Activated CD4-positive, alpha-beta T cell treated with anti-CD3 and anti-CD28 coated beads for 36 hours (primary cell): ENCODE measurements at regions of chr15 and their contacts with region 1.

Region 1: DNA sequence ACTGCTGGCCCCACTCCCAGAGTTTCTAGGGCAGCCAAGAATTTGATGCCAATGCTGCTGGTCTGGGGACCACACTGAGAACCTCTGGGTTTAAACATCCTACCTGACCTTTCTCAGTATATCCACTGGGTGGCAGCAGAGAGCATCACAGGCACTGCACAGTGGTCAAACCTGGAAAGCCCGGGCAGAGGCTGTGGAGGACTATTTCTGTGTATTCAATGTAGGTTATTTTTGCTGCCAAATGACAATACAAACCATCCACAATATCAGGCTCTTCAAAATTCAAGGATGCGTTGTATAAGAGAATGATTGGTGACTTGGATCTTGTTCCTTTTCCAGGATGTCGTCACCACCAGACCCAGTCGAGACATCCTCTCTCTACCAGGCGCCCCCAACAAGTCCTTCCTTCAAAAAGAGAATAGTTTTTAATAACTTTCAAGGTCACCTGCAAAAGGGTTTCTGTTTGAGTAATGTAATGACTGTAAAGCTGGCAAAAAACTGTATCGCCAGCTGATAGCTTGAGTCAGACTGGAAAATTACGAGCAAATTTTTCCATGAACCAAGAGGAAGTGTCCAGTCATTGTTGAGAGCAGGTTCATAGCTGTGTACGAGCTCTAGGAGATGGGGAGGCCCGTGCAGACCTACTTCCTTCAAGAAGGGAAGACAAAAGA is 30.5 kb upstream of the MYZAP start:
- DNase-seq: peak; percentile 74
- ATAC-seq: peak; percentile 83
- H3K4me3 Mint-ChIP-seq: peak overlapping the region; percentile 17
- H3K27ac Mint-ChIP-seq: peak overlapping the region; percentile 89
- H3K4me1 Mint-ChIP-seq: peaks cover 37% of the 10 kb centered on the region
- H3K27me3 Mint-ChIP-seq: no peaks in the 10 kb centered on the region

Region 2: GRCh38 chr15:57548835-57549234 is 12.3 kb before region 1 on chr15:
- CTCF ChIA-PET with region 1: interaction called, 10 read pairs
- POLR2A ChIA-PET with region 1: no interaction called
- intact Hi-C with region 1: no loop called
- DNase-seq: no peak
- ATAC-seq: no peak
- H3K4me3 Mint-ChIP-seq: no peak overlapping the region
- H3K27ac Mint-ChIP-seq: no peak overlapping the region
- H3K4me1 Mint-ChIP-seq: no peaks in the 10 kb centered on the region
- H3K27me3 Mint-ChIP-seq: no peaks in the 10 kb centered on the region

Region 3: DNA sequence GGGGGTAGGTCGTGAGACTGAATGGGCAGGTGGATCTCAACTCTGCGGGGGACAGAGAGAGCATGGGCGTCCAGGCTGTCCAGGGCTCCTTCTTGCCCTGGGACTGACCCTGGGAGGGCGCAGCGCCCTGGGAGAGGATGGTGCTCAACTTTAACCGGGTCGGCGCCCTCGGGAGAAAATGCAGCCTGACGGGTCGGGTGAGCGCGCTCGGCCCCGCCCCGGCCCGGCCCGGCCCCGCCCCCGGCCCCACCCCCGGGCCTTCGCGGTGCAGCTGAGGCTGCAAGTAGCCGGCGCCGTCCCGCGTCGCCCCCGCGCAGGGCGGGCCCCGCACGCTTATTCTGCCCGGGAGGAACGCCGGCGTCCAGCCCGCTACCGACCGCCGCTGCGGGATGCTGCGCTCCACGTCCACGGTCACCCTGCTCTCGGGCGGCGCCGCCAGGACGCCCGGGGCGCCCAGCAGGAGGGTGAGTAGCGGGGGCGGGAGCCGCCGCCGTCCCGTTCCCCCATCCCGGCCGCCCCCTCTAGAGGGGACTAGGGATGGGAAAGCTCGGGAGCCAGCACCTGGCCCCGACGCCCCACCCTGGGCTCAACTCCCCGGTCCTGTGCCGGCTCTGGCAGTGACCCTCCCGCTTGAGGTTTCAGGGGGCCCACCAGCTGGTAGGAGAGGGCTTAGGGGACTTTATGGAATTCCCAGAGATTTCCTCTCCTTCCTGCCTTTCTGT is 30.6 kb after region 1 on chr15 and contains the start of gene MYZAP:
- CTCF ChIA-PET with region 1: interaction called, 15 read pairs
- POLR2A ChIA-PET with region 1: no interaction called
- intact Hi-C with region 1: loop called in 1 of 2 experiments (anchors 1 kb)
- DNase-seq: peak; percentile 64
- ATAC-seq: peak; percentile 72
- H3K4me3 Mint-ChIP-seq: peak within 1 kb of the TSS; percentile 57
- H3K27ac Mint-ChIP-seq: no peak within 1 kb of the TSS
- H3K4me1 Mint-ChIP-seq: peaks cover 29% of the 10 kb centered on the region
- H3K27me3 Mint-ChIP-seq: peaks cover 21% of the 10 kb centered on the region
- total RNA-seq, gene MYZAP: 0.11 TPM

Region 4: DNA sequence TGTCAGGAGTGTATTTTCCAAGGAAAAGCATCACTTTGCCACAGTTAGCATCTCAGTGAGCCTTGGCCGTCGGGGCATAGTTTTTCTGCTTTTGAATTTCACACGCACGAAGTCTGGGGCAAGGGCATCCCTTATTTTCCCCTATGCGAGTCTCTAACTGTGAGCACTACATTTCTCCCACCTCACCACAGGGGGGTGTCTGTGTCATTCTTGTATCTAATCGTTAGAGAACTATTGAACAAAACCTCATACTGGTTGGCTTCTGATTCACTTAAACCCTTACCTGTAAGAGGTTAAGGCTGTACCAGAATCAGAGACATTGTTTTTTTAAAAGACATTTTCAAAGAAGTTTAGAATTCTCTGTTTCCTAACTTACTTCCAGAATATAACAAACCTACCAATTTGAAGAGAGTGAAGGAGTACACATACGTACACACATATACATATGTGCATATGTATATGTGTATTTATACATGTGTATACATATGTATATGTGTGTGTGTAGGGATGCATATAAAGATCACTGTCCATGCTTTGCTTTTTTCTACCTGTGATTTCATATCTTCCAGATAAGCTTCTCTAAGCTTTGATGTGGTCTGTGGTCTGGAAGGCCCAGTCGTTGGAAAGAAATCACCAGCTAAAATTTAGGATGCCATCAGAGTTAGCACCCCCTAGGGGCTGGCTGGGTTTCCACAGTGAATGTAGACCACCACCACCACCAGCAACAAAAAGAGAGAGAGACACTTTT is 79.9 kb after region 1 on chr15:
- CTCF ChIA-PET with region 1: interaction called, 7 read pairs
- POLR2A ChIA-PET with region 1: no interaction called
- intact Hi-C with region 1: loop called (anchors 2 to 5 kb)
- DNase-seq: peak; percentile 38
- ATAC-seq: peak; percentile 49
- H3K4me3 Mint-ChIP-seq: no peak overlapping the region
- H3K27ac Mint-ChIP-seq: no peak overlapping the region
- H3K4me1 Mint-ChIP-seq: no peaks in the 10 kb centered on the region
- H3K27me3 Mint-ChIP-seq: peaks cover 2% of the 10 kb centered on the region